ENCODE measurements at regions of chr6 and their contacts with region 1.

Region 1: GRCh38 chr6:2848851-2849250 is 7.2 kb upstream of the SERPINB1 start:
- DNase-seq: no peak

Region 2: DNA sequence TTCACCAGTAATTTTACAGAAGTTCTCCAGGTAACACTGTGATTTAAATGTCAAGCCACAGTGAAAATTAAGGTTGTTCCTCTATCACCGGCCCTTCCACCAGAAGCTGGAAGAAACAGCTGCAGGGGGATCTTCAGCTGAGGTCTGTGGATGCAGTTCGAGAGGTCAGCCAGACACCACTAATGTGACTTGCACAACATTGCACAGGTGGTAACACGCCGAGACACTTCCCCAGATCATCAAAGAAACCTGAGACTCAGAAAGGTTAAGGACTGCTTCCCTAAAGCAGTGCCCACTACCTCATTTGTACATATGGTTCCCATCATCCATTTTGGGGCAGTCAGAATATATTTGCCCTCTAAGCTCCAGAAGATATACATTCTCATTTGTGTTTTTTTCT is 62.3 kb after region 1 on chr6:
- intact Hi-C with region 1: loop called (anchors 5 kb)
- DNase-seq: peak; percentile 36